Ascending aorta (tissue), 2 donors: ENCODE measurements at regions of chr18 and their contacts with region 1.

Region 1: DNA sequence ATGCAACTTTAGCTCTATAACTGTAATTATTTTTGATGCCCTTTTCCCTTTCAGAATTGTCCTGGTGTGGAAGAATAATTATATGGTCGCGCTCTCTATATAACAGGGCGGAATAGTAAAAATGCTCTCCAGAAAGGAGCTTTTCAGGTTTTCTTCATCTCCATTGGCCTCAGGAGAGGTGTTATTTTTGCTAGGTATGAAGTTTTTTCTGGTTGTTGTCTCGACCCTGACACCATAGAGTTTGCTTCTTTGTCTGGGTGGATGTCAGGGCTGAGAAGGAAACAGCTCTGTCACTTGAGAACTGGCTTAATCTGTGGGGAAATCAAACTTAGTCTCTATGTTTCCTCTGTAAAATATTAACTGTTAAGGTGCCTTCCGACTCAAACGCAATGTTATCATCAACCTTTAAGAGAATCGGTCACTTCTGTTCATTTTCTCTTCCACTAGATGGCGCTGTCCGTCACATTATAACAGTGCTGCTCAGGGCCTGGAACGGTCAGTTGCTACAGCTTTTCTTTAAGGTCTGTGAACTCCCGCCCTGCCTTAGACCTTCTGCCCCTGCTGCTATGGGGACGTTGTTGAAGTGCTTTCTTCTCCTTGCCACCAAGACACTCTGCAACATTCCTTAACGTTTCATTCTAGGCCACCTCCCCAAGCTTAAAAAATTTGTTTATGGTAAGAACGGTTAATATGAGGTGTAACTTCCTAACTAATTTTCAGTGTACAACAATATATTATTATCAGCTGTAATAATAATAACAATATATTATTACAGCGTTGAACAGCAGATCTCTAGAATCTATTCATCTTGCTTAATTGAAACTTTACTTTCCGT is 23.8 kb upstream of the SERPINB12 start:
- DNase-seq: peak in 1 of 2 donors; percentile 70
- H3K4me3 ChIP-seq: no peak overlapping the region
- H3K27ac ChIP-seq: no peak overlapping the region
- H3K4me1 ChIP-seq: no peaks in the 10 kb centered on the region
- H3K27me3 ChIP-seq: no peaks in the 10 kb centered on the region
- CTCF ChIP-seq: peak; percentile 59 to 82 (median 66)

Region 2: GRCh38 chr18:63271881-63272299 is 246.5 kb before region 1 on chr18:
- intact Hi-C with region 1: no loop called
- DNase-seq: no peak
- H3K4me3 ChIP-seq: no peak overlapping the region
- H3K27ac ChIP-seq: no peak overlapping the region
- H3K4me1 ChIP-seq: peaks cover 0 to 2% of the 10 kb centered on the region in 2 donors
- H3K27me3 ChIP-seq: no peaks in the 10 kb centered on the region
- CTCF ChIP-seq: no peak

Region 3: GRCh38 chr18:63284827-63285733 is 233.3 kb before region 1 on chr18:
- intact Hi-C with region 1: no loop called
- DNase-seq: no peak
- H3K4me3 ChIP-seq: no peak overlapping the region
- H3K27ac ChIP-seq: peak overlapping the region; percentile 14 to 20
- H3K4me1 ChIP-seq: peaks cover 0 to 38% of the 10 kb centered on the region in 2 donors
- H3K27me3 ChIP-seq: no peaks in the 10 kb centered on the region
- CTCF ChIP-seq: no peak

Region 4: GRCh38 chr18:63451799-63452660 is 66.4 kb before region 1 on chr18:
- intact Hi-C with region 1: no loop called
- DNase-seq: no peak
- H3K4me3 ChIP-seq: no peak overlapping the region
- H3K27ac ChIP-seq: no peak overlapping the region
- H3K4me1 ChIP-seq: no peaks in the 10 kb centered on the region
- H3K27me3 ChIP-seq: no peaks in the 10 kb centered on the region
- CTCF ChIP-seq: no peak

Region 5: GRCh38 chr18:63579616-63580015 is 61.2 kb after region 1 on chr18:
- intact Hi-C with region 1: loop called (anchors 2 kb)
- DNase-seq: no peak
- H3K4me3 ChIP-seq: no peak overlapping the region
- H3K27ac ChIP-seq: no peak overlapping the region
- H3K4me1 ChIP-seq: no peaks in the 10 kb centered on the region
- H3K27me3 ChIP-seq: no peaks in the 10 kb centered on the region
- CTCF ChIP-seq: no peak

Region 6: GRCh38 chr18:63603772-63604171 is 85.4 kb after region 1 on chr18:
- intact Hi-C with region 1: no loop called
- DNase-seq: no peak
- H3K4me3 ChIP-seq: no peak overlapping the region
- H3K27ac ChIP-seq: no peak overlapping the region
- H3K4me1 ChIP-seq: no peaks in the 10 kb centered on the region
- H3K27me3 ChIP-seq: no peaks in the 10 kb centered on the region
- CTCF ChIP-seq: no peak

Region 7: GRCh38 chr18:63936156-63936931 is 417.9 kb after region 1 on chr18:
- intact Hi-C with region 1: loop called (anchors 1 kb)
- DNase-seq: peak; percentile 25 to 90
- H3K4me3 ChIP-seq: peak overlapping the region; percentile 58 to 82
- H3K27ac ChIP-seq: no peak overlapping the region
- H3K4me1 ChIP-seq: peaks cover 0 to 5% of the 10 kb centered on the region in 2 donors
- H3K27me3 ChIP-seq: no peaks in the 10 kb centered on the region
- CTCF ChIP-seq: peak; percentile 43 to 82 (median 68)